Common myeloid progenitor, CD34-positive (primary cell): ENCODE measurements at regions of chr13 and their contacts with region 1.

Region 1: GRCh38 chr13:78121459-78122348 is 203.1 kb upstream of the EDNRB start:
- DNase-seq: peak; percentile 71 to 89 (median 84)
- H3K4me3 ChIP-seq: peak overlapping the region in 1 of 7 experiments; percentile 24
- H3K27ac ChIP-seq: no peak overlapping the region
- H3K4me1 ChIP-seq: no peaks in the 10 kb centered on the region
- H3K27me3 ChIP-seq: no peaks in the 10 kb centered on the region

Region 2: GRCh38 chr13:77774181-77774580 is 347.5 kb before region 1 on chr13:
- CTCF ChIA-PET with region 1: interaction called, 44 read pairs
- POLR2A ChIA-PET with region 1: no interaction called
- DNase-seq: no peak
- H3K4me3 ChIP-seq: no peak overlapping the region
- H3K27ac ChIP-seq: no peak overlapping the region
- H3K4me1 ChIP-seq: no peaks in the 10 kb centered on the region
- H3K27me3 ChIP-seq: no peaks in the 10 kb centered on the region

Region 3: GRCh38 chr13:77779552-77780272 is 342.0 kb before region 1 on chr13:
- CTCF ChIA-PET with region 1: interaction called, 44 read pairs
- POLR2A ChIA-PET with region 1: no interaction called
- DNase-seq: peak; percentile 87 to 97 (median 95)
- H3K4me3 ChIP-seq: peak overlapping the region in 3 of 7 experiments; percentile 3 to 34 (median 13)
- H3K27ac ChIP-seq: no peak overlapping the region
- H3K4me1 ChIP-seq: peaks cover 3 to 15% (median 13%) of the 10 kb centered on the region in 4 experiments
- H3K27me3 ChIP-seq: no peaks in the 10 kb centered on the region

Region 4: GRCh38 chr13:78131811-78132210 is 10.1 kb after region 1 on chr13:
- CTCF ChIA-PET with region 1: interaction called, 14 read pairs
- POLR2A ChIA-PET with region 1: no interaction called
- DNase-seq: no peak
- H3K4me3 ChIP-seq: no peak overlapping the region
- H3K27ac ChIP-seq: no peak overlapping the region
- H3K4me1 ChIP-seq: peaks cover 0 to 3% (median 0%) of the 10 kb centered on the region in 4 experiments
- H3K27me3 ChIP-seq: no peaks in the 10 kb centered on the region